Activated B cell treated with CpG ODN at 0.5 μM for 24 hours (primary cell): ENCODE measurements at regions of chrX and their contacts with region 1.

Region 1: DNA sequence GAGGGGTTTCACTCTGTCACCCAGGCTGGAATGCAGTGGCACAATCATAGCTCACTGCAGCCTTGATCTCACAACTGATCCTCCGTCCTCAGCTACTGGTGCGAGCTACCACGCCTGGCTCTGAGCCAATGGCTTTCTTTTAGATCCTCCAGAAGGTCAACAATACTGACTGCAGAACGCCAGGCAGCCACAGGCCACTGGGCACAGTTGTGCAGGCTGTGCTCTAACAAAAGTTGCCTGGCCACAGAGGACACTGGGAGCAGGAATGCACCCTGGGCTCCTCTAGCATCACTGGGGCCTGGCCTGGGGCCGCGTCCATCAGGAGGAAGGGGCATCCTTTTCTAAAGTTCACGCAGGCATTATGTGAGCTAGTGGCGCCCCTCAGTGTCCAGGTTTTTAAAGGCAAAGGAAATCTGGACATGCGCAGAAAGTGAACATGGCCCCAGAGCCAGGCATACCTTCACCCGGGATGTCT is 14.9 kb upstream of the PORCN start:
- DNase-seq: no peak
- ATAC-seq: peak; percentile 31
- H3K4me3 Mint-ChIP-seq: no peak overlapping the region
- H3K27ac Mint-ChIP-seq: no peak overlapping the region
- H3K4me1 Mint-ChIP-seq: no peaks in the 10 kb centered on the region
- H3K27me3 Mint-ChIP-seq: peaks cover 2% of the 10 kb centered on the region
- CTCF ChIP-seq: no peak

Region 2: DNA sequence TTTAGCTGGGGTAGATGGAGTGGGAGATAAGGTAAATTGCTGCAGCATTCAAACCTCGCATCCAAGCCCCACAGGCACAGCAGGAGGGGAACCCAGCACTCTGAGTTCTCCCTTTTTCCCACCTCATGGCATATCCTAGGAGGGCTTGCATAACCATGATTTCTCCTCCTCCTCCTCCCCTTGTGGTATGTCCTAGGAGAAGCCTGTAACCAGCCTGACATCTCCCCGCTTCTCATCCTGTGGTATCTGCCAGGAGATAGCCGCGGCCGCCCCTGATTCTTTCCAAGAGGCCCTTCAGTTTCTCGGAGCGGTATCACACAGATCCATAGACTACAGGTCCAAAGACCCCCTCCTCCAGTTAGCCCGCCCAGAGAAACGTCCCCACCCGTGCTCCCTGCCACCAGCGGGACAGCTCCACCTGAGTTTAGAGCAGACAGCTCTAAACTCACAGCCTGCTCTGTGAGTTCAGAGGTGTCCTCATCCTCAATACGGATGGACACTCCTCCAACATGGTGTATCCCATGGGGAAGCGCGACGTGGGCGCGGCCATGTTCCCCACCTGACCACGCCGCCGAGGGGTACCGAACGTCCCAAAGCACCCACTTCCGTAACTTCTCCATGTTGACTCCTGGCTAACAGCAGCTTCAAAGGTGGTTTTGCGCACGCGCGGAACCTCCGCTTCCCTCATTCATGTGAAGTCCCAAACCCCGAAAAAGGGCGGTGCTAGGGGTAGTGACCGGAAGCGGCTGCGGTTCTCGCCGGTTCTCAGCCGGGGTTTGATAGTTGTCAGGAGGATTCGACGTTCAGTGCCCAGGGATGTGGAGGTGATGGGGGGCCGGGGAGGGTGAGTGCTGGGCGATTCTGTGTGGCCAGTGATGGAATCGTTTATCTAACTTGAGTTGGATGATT is 657.5 kb before region 1 on chrX and contains the start of gene ZNF81:
- CTCF ChIA-PET with region 1: interaction called, 6 read pairs
- POLR2A ChIA-PET with region 1: no interaction called
- intact Hi-C with region 1: loop called (anchors 5 kb)
- DNase-seq: peak; percentile 76
- ATAC-seq: peak; percentile 95
- H3K4me3 Mint-ChIP-seq: peak within 1 kb of the TSS; percentile 93
- H3K27ac Mint-ChIP-seq: peak within 1 kb of the TSS; percentile 93
- H3K4me1 Mint-ChIP-seq: peaks cover 21% of the 10 kb centered on the region
- H3K27me3 Mint-ChIP-seq: no peaks in the 10 kb centered on the region
- CTCF ChIP-seq: no peak
- total RNA-seq, gene ZNF81: 11.0 and 15.3 TPM in 2 replicates

Region 3: DNA sequence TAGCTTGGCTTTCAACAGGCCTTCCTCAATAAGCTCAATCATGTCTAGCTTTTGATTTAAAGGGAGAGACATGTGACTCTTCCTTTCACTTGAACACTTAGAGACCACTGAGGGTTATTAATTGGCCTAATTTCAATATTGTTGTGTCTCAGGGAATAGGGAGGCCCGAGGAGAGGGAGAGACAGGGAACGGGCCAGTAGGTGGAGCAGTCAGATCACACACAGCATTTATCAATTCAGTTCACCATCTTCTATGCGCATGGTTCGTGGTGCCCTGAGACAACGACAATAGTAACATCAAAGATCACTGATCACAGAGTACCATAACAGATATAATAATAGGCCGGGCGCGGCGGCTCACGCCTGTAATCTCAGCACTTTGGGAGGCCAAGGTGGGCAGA is 639.5 kb before region 1 on chrX:
- CTCF ChIA-PET with region 1: no interaction called
- POLR2A ChIA-PET with region 1: no interaction called
- intact Hi-C with region 1: loop called (anchors 1 kb)
- DNase-seq: no peak
- ATAC-seq: peak; percentile 49
- H3K4me3 Mint-ChIP-seq: no peak overlapping the region
- H3K27ac Mint-ChIP-seq: no peak overlapping the region
- H3K4me1 Mint-ChIP-seq: peaks cover 8% of the 10 kb centered on the region
- H3K27me3 Mint-ChIP-seq: no peaks in the 10 kb centered on the region
- CTCF ChIP-seq: no peak